ENCODE measurements at regions of chr6 and their contacts with region 1.

Region 1: DNA sequence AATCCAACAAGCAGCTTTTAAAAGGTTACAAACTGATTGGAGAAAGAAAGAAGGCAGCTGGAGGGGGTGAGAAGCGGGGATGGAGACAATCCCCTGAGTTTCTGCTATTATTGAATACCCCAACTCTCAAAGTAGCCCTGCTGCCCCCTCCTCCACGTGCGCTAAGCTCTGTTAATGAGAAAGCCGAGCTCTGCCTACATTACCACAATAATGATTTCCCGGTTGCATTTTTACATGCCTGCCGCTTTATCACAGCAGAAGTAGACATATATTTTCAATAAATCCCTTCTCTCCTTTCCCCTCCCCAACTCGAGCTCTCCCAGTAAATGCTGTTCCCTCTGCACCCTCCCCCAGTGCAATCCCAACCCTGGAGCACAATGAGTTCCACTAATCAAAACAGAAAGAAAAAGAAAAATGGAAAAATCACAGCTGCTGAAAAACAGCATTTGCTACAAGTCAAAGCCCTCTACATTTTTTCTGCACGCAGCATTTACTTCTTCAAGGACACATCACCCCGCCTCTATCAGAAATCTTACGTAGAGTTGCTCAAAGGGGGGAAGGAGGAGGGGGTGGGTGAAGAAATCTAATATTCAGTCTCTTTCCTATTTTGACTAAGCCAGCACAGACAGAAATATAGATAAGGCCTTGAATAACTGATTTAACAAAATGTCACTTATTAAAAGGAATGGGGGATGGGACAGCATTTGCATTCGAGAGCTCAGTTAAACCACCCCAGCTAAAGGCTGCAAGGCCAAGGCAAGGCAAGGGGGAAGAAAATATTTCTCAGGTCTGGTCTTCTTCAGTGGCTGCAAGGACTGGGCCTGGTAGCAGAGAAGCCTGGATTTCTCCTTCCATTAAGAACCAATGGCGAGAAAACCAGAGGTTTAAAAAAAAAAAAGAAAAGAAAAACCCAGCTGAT is 10.7 kb downstream of the TRERF1 start:
- DNase-seq: no peak
- ATAC-seq: no peak
- H3K4me3 ChIP-seq: no peak overlapping the region
- H3K27ac ChIP-seq: no peak overlapping the region
- H3K4me1 ChIP-seq: no peaks in the 10 kb centered on the region
- H3K27me3 ChIP-seq: no peaks in the 10 kb centered on the region
- CTCF ChIP-seq: no peak

Region 2: DNA sequence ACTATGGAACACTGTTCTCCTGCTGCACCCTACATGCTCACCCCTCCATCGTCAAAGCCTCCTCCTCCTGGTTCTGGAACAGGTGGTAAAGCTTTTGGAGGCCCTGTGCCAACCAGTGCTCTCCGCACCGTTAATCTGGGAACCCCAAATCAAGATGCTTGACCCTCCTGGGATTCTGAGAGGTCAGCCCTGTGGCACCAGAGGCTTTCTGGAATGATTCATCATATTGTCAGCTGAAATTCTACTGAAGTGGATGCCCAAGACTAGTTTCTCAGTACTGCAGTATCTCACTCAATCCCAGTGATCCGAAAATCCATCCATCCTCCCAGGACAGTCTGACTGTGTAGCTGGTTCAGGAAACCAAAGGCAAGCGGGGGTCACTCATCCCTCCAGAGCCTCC is 82.0 kb before region 1 on chr6:
- CTCF ChIA-PET with region 1: no interaction called
- POLR2A ChIA-PET with region 1: no interaction called
- intact Hi-C with region 1: loop called (anchors 5 kb)
- DNase-seq: peak; percentile 23
- ATAC-seq: no peak
- H3K4me3 ChIP-seq: no peak overlapping the region
- H3K27ac ChIP-seq: no peak overlapping the region
- H3K4me1 ChIP-seq: peaks cover 24% of the 10 kb centered on the region
- H3K27me3 ChIP-seq: no peaks in the 10 kb centered on the region
- CTCF ChIP-seq: no peak

Region 3: DNA sequence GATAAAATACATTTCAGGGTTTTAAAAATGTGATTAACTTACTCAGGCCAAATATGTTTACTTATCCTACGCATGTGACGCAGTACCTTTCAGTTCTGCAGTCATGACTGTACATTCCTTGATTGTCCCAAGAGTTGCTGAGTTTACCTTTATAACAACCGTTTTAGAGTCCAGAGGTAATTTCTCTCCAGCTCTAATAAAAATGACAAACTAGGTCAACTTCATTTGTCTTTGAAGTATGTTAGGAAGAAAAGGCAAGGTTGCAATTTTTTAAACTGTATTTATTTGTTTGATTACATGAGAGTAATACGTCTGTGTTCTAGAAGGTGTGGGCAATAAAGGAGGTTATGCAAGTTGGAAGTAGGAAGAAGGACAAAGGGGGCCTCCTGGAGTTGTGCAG is 84.2 kb after region 1 on chr6:
- CTCF ChIA-PET with region 1: no interaction called
- POLR2A ChIA-PET with region 1: interaction called, 21 read pairs
- intact Hi-C with region 1: no loop called
- DNase-seq: no peak
- ATAC-seq: no peak
- H3K4me3 ChIP-seq: no peak overlapping the region
- H3K27ac ChIP-seq: no peak overlapping the region
- H3K4me1 ChIP-seq: peaks cover 37% of the 10 kb centered on the region
- H3K27me3 ChIP-seq: no peaks in the 10 kb centered on the region
- CTCF ChIP-seq: no peak

Region 4: GRCh38 chr6:43500921-43501320 is 1059.9 kb after region 1 on chr6:
- CTCF ChIA-PET with region 1: no interaction called
- POLR2A ChIA-PET with region 1: interaction called, 10 read pairs
- intact Hi-C with region 1: no loop called
- DNase-seq: no peak
- ATAC-seq: no peak
- H3K4me3 ChIP-seq: no peak overlapping the region
- H3K27ac ChIP-seq: no peak overlapping the region
- H3K4me1 ChIP-seq: no peaks in the 10 kb centered on the region
- H3K27me3 ChIP-seq: no peaks in the 10 kb centered on the region
- CTCF ChIP-seq: no peak

Measured in PC-3 (cell line).